SK-N-SH (cell line): ENCODE measurements at regions of chr3 and their contacts with region 1.

Region 1: DNA sequence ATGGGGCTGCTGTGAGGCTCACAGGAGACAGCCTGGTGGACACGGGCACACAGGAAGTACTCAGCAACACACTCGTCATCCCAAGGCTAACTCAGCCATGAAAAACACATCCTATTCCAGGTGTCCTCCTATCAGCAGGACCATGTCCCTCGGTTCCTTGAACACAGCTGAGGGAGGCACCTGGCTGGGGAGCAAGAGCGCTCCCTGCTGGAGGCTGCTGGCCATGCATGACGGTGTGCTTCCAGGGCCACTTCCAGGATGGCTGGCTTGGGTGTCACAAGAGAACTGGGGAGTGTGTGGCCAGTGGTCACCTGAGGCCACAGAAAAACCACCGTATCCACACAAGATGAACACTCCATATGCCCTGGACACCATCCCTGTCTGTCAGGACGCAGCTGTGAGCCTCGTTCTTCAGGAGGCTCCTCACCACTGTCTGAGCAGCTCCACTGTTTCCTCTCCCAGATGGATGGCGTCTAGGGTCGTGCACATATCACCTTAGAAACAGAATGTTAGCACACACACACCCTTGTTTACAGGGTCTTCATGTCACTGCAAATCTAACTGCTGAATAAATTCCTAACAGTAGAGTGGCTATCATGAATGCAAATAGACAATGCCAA is 31.0 kb downstream of the POC1A start:
- DNase-seq: peak; percentile 87
- H3K4me3 ChIP-seq: no peak overlapping the region; a peak in 1 of 4 replicates
- H3K27ac ChIP-seq: peak overlapping the region in 1 of 2 experiments; percentile 83; a peak in 2 of 4 replicates
- H3K4me1 ChIP-seq: peaks cover 5 to 33% of the 10 kb centered on the region in 2 experiments; a peak in 2 of 4 replicates
- H3K27me3 ChIP-seq: no peaks in the 10 kb centered on the region
- CTCF ChIP-seq: peak; percentile 96
- EP300 ChIP-seq: no peak
- RAD21 ChIP-seq: peak; percentile 97

Region 2: GRCh38 chr3:51830836-51831385 is 292.3 kb before region 1 on chr3:
- CTCF ChIA-PET with region 1: no interaction called
- POLR2A ChIA-PET with region 1: no interaction called
- DNase-seq: no peak
- H3K4me3 ChIP-seq: no peak overlapping the region
- H3K27ac ChIP-seq: no peak overlapping the region
- H3K4me1 ChIP-seq: peaks cover 0 to 4% of the 10 kb centered on the region in 2 experiments; a peak in 1 of 4 replicates
- H3K27me3 ChIP-seq: no peaks in the 10 kb centered on the region
- CTCF ChIP-seq: no peak
- EP300 ChIP-seq: no peak
- RAD21 ChIP-seq: no peak

Region 3: GRCh38 chr3:52014613-52015012 is 108.6 kb before region 1 on chr3:
- CTCF ChIA-PET with region 1: interaction called, 10 read pairs
- POLR2A ChIA-PET with region 1: no interaction called
- DNase-seq: no peak
- H3K4me3 ChIP-seq: no peak overlapping the region
- H3K27ac ChIP-seq: peak overlapping the region in 1 of 2 experiments; percentile 98; a peak in 2 of 4 replicates
- H3K4me1 ChIP-seq: peaks cover 0 to 57% of the 10 kb centered on the region in 2 experiments; a peak in 1 of 4 replicates
- H3K27me3 ChIP-seq: no peaks in the 10 kb centered on the region
- CTCF ChIP-seq: peak; percentile 47
- EP300 ChIP-seq: no peak
- RAD21 ChIP-seq: peak; percentile 49

Region 4: GRCh38 chr3:52041118-52041731 is 82.0 kb before region 1 on chr3:
- CTCF ChIA-PET with region 1: interaction called, 24 read pairs
- POLR2A ChIA-PET with region 1: interaction called, 6 read pairs
- DNase-seq: peak; percentile 93
- H3K4me3 ChIP-seq: no peak overlapping the region
- H3K27ac ChIP-seq: peak overlapping the region in 1 of 2 experiments; percentile 100; a peak in 2 of 4 replicates
- H3K4me1 ChIP-seq: peaks cover 18 to 87% of the 10 kb centered on the region in 2 experiments; a peak in 3 of 4 replicates
- H3K27me3 ChIP-seq: no peaks in the 10 kb centered on the region
- CTCF ChIP-seq: peak; percentile 52
- EP300 ChIP-seq: peak in 1 of 2 experiments; percentile 98; a peak in 2 of 4 replicates
- RAD21 ChIP-seq: peak; percentile 66

Region 5: GRCh38 chr3:52070724-52071621 is 52.2 kb before region 1 on chr3:
- CTCF ChIA-PET with region 1: interaction called, 35 read pairs
- POLR2A ChIA-PET with region 1: interaction called, 4 read pairs
- DNase-seq: peak; percentile 50
- H3K4me3 ChIP-seq: no peak overlapping the region
- H3K27ac ChIP-seq: peak overlapping the region in 1 of 2 experiments; percentile 100; a peak in 2 of 4 replicates
- H3K4me1 ChIP-seq: peaks cover 0 to 60% of the 10 kb centered on the region in 2 experiments; a peak in 2 of 4 replicates
- H3K27me3 ChIP-seq: no peaks in the 10 kb centered on the region
- CTCF ChIP-seq: no peak
- EP300 ChIP-seq: no peak
- RAD21 ChIP-seq: no peak

Region 6: GRCh38 chr3:52136513-52136912 is 13.3 kb after region 1 on chr3:
- CTCF ChIA-PET with region 1: interaction called, 48 read pairs
- POLR2A ChIA-PET with region 1: no interaction called
- DNase-seq: peak; percentile 42
- H3K4me3 ChIP-seq: no peak overlapping the region
- H3K27ac ChIP-seq: peak overlapping the region in 1 of 2 experiments; percentile 73; a peak in 2 of 4 replicates
- H3K4me1 ChIP-seq: peaks cover 0 to 22% of the 10 kb centered on the region in 2 experiments; a peak in 1 of 4 replicates
- H3K27me3 ChIP-seq: no peaks in the 10 kb centered on the region
- CTCF ChIP-seq: no peak
- EP300 ChIP-seq: no peak
- RAD21 ChIP-seq: no peak

Region 7: GRCh38 chr3:52188342-52188955 is 65.2 kb after region 1 on chr3:
- CTCF ChIA-PET with region 1: no interaction called
- POLR2A ChIA-PET with region 1: no interaction called
- DNase-seq: no peak
- H3K4me3 ChIP-seq: no peak overlapping the region
- H3K27ac ChIP-seq: no peak overlapping the region
- H3K4me1 ChIP-seq: peaks cover 10 to 16% of the 10 kb centered on the region in 2 experiments; a peak in 3 of 4 replicates
- H3K27me3 ChIP-seq: no peaks in the 10 kb centered on the region
- CTCF ChIP-seq: no peak
- EP300 ChIP-seq: no peak
- RAD21 ChIP-seq: no peak